ENCODE measurements at regions of chr6 and their contacts with region 1.

Region 1: DNA sequence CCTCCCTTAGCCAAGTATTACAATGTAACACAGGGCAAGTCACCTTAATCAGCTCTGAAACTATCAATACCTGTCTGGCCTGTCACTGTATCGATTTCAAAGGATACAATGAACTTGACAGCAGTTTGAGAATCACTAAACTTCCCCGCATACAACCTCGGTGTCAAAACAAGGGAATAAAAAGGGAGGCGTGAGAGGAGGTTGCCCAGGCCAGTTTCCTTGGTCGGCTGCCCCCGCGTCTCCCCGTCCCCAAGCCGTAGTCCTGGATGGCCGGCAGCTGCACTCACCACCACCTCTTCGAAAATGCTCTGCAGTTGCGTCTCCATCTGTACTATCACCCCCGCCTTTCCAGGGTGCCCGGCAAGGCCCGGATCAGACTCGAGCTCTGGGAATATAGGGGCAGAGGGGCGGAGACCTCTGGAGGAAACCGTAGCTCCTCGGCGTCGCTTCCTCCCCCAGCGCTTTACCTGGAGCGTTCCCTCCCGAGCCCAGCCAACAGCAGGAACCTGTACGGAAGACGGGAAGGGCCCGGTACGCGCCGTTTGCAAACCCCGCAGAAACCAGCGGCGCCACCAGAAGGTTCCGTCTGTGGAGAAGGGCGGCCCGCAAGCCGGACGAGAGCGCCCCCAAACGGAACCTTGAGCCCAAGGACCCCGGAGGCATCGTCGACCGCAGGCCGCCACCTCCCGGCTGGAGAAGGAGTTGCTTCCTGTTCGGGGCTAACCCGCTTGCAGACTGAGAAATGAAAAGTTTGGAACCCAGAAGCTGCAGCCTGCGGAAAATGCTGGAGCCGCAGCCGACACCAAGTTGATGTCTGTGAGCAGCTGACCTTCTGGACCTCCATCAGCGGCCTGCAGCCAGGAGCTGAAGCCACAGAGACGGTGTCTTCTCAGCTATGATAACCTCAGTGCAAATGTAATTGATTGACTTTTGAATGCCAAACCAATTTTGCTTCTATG is at the start of gene MED23:
- DNase-seq: peak; percentile 97
- ATAC-seq: peak; percentile 87
- H3K4me3 Mint-ChIP-seq: peak within 1 kb of the TSS; percentile 86
- H3K27ac Mint-ChIP-seq: peak within 1 kb of the TSS; percentile 92
- H3K4me1 Mint-ChIP-seq: peaks cover 27% of the 10 kb centered on the region
- H3K27me3 Mint-ChIP-seq: no peaks in the 10 kb centered on the region
- total RNA-seq, gene MED23: 23.9 to 26.0 TPM

Region 2: DNA sequence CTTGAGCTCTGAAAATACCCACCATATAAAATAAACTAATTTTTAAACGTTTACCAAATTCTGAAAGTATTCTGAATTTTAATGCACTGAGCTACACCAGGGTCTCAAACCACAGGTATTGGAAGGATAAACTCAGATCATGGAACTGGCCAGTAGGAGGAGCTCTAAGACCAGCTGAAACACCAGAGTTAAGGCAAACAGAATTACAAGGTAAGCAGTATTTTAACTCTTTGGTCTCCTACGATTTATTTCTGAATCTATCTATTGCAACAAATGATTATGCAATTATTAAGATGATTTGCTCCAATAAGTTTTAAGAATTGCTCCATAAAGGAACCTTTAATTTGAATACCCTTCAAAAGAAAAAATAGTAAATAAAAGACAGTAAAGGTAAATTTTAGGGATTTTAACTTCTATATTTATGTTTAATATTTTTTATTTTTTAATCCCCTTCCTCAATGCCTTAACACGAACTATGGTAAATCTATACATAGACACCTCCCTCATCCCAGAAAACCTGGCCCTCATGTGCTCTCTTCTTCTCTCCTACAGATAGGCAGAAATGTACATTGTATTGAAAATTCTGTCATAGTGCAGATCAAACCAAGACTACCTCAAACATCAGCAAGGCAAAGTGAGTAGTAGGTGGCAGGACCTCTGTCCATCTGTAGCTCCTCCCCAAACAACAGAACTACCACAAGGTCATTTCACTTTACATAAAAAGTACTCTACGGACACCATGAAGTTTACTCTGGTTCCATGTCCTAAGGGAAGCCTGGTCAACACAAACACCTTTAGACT is 742.4 kb before region 1 on chr6:
- CTCF ChIA-PET with region 1: interaction called, 3 read pairs
- POLR2A ChIA-PET with region 1: no interaction called
- intact Hi-C with region 1: loop called (anchors 2 to 5 kb)
- DNase-seq: peak; percentile 80
- ATAC-seq: peak; percentile 76
- H3K4me3 Mint-ChIP-seq: no peak overlapping the region
- H3K27ac Mint-ChIP-seq: no peak overlapping the region
- H3K4me1 Mint-ChIP-seq: no peaks in the 10 kb centered on the region
- H3K27me3 Mint-ChIP-seq: no peaks in the 10 kb centered on the region

Region 3: GRCh38 chr6:131135244-131136020 is 492.6 kb before region 1 on chr6 and contains the start of gene AKAP7:
- CTCF ChIA-PET with region 1: no interaction called
- POLR2A ChIA-PET with region 1: no interaction called
- intact Hi-C with region 1: loop called in 1 of 2 experiments (anchors 2 kb)
- DNase-seq: peak; percentile 76
- ATAC-seq: peak; percentile 81
- H3K4me3 Mint-ChIP-seq: peak within 1 kb of the TSS; percentile 91
- H3K27ac Mint-ChIP-seq: peak within 1 kb of the TSS; percentile 97
- H3K4me1 Mint-ChIP-seq: peaks cover 12% of the 10 kb centered on the region
- H3K27me3 Mint-ChIP-seq: no peaks in the 10 kb centered on the region
- total RNA-seq, gene AKAP7: 5.1 to 6.0 TPM

Region 4: DNA sequence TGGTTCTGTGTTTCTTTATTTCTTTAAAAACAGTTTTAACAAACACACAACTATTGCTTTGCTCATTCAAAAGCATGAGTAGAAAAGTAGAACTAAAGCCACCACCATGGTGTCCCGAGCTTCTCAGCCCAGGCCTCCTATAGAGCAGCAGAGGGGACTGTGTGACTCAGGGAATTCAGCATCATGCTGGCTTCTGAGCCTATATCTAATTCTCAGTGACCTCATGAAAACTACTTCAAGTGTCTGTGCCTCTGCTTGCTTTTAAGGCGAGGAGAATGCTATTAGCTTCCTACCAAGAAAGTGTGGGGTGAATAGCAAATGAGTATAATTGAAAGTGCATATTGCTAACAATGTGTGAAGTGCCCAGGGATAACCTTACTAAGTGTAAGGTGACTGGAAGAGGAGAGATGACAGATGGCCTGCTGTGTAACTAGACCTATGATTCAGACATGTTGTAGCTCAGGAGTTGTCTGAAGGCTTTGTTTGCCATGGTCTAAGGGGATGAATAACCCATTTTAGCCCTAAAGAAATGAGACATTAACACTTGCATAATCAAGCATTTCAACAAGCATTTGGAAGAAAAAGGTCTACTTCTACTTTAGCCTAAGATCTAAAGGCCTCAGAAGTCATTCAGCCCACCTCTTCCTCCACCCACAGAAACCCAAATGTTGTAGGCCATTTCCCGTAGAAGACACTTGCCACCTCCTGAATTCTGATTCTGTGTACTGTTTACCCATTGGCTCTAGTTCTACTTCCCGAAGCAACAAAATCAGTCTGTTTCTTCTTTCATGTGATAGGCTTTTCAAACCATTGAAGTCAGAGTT is 176.5 kb before region 1 on chr6:
- CTCF ChIA-PET with region 1: no interaction called
- POLR2A ChIA-PET with region 1: no interaction called
- intact Hi-C with region 1: loop called in 1 of 2 experiments (anchors 5 kb)
- DNase-seq: peak; percentile 18
- ATAC-seq: peak; percentile 95
- H3K4me3 Mint-ChIP-seq: no peak overlapping the region
- H3K27ac Mint-ChIP-seq: peak overlapping the region; percentile 84
- H3K4me1 Mint-ChIP-seq: peaks cover 32% of the 10 kb centered on the region
- H3K27me3 Mint-ChIP-seq: no peaks in the 10 kb centered on the region

Region 5: GRCh38 chr6:131532580-131533039 is 95.4 kb before region 1 on chr6:
- CTCF ChIA-PET with region 1: interaction called, 11 read pairs
- POLR2A ChIA-PET with region 1: no interaction called
- intact Hi-C with region 1: loop called in 1 of 2 experiments (anchors 2 kb)
- DNase-seq: peak; percentile 81
- ATAC-seq: peak; percentile 94
- H3K4me3 Mint-ChIP-seq: no peak overlapping the region
- H3K27ac Mint-ChIP-seq: peak overlapping the region; percentile 81
- H3K4me1 Mint-ChIP-seq: peaks cover 51% of the 10 kb centered on the region
- H3K27me3 Mint-ChIP-seq: no peaks in the 10 kb centered on the region

Region 6: DNA sequence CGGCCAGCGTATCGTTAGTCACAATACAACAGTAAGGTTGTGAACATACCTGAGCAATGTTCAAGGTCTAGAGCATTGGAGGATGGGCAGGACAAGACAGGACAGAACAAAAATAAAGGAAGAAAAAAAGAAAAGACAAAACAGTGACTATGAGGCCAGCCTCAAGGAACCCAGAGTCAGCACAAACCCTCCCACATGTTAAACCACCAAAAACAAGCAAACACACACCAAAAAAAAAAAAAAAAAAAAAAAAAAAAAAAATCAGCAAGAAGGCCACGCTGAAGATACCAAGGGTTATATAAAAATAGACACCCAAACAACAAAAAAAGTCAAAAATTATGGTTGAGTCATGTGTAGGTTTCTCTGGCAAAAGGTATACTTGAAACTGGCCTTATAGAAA is 12.7 kb before region 1 on chr6:
- CTCF ChIA-PET with region 1: interaction called, 13 read pairs
- POLR2A ChIA-PET with region 1: interaction called, 4 read pairs
- intact Hi-C with region 1: no loop called
- DNase-seq: no peak
- ATAC-seq: no peak
- H3K4me3 Mint-ChIP-seq: no peak overlapping the region
- H3K27ac Mint-ChIP-seq: no peak overlapping the region
- H3K4me1 Mint-ChIP-seq: peaks cover 2% of the 10 kb centered on the region
- H3K27me3 Mint-ChIP-seq: no peaks in the 10 kb centered on the region

Region 7: DNA sequence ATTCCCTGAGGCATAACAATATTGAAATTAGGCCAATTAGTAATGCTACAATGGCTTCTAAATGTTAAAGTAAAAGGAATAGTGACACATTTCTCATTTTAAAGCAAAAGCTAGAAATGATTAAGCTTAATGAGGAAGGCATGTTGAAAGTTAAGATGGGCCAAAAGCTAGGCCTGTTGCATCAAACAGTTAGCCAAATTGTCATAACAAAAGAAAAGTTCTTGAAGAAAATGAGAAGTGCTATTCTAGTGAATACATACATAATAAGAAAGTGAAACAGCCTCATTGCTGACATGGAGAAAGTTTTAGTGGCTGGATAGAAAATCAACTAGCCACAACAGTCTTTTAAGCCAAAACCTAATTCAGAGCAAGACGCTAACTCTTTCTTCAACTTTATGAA is 60.3 kb after region 1 on chr6:
- CTCF ChIA-PET with region 1: interaction called, 3 read pairs
- POLR2A ChIA-PET with region 1: no interaction called
- intact Hi-C with region 1: loop called in 1 of 2 experiments (anchors 5 kb)
- DNase-seq: no peak
- ATAC-seq: peak; percentile 70
- H3K4me3 Mint-ChIP-seq: no peak overlapping the region
- H3K27ac Mint-ChIP-seq: peak overlapping the region; percentile 51
- H3K4me1 Mint-ChIP-seq: peaks cover 14% of the 10 kb centered on the region
- H3K27me3 Mint-ChIP-seq: no peaks in the 10 kb centered on the region

Measured in activated CD4-positive, alpha-beta T cell treated with anti-CD3 and anti-CD28 coated beads for 36 hours (primary cell).